ENCODE measurements at regions of chr6 and their contacts with region 1.

Region 1: GRCh38 chr6:31952140-31952805 is 6.4 kb downstream of the CFB start:
- DNase-seq: peak; percentile 92
- H3K4me3 Mint-ChIP-seq: no peak overlapping the region
- H3K27ac Mint-ChIP-seq: peak overlapping the region; percentile 69
- H3K4me1 Mint-ChIP-seq: peaks cover 41% of the 10 kb centered on the region
- H3K27me3 Mint-ChIP-seq: no peaks in the 10 kb centered on the region
- CTCF ChIP-seq: peak; percentile 95

Region 2: DNA sequence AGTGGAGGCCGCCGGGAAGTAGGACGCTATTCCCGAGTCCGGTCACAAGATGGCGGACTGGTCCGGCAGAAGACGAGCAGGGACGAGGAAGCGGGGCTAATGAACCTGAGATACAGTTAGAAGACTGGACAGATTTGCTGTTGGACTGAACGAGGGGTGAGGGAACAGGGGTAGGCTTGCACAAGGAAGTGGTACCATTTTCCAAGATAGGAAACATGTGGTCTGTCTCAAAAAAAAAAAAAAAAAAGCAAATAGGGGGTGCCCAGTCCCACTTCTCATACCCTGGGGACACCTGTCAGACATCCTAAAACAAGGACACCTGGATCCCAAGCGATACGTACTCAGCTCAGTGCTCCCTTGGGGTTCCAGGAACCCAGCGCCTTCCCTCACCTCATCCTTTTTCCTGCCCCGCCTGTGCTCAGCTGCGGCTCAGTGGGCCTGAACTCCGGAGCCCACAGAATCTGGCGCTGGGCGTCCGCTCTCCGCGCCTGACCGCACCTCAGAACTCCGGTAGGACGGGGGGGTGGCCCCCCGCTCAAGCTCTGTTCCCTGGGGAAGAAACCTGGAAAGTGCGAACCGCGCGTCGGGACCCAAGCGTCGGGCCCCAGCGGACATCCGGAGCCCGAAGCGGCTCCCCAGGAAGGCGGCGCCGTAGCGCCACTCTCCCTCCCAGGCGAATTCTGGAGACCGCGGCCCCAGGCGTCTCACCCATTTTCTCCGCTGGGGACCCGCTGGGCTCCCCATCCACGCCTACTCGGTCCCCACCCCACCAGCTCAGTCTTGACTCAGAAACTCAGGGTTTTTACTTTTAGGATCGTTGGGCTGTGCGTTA is 271.2 kb before region 1 on chr6 and contains the start of gene LY6G5C:
- CTCF ChIA-PET with region 1: interaction called, 6 read pairs
- intact Hi-C with region 1: loop called (anchors 1 kb)
- DNase-seq: peak; percentile 94
- H3K4me3 Mint-ChIP-seq: peak within 1 kb of the TSS; percentile 75
- H3K27ac Mint-ChIP-seq: peak within 1 kb of the TSS; percentile 89
- H3K4me1 Mint-ChIP-seq: peaks cover 28% of the 10 kb centered on the region
- H3K27me3 Mint-ChIP-seq: no peaks in the 10 kb centered on the region
- CTCF ChIP-seq: peak; percentile 83
- total RNA-seq, gene LY6G5C: 4.9 and 5.4 TPM in 2 replicates

Region 3: DNA sequence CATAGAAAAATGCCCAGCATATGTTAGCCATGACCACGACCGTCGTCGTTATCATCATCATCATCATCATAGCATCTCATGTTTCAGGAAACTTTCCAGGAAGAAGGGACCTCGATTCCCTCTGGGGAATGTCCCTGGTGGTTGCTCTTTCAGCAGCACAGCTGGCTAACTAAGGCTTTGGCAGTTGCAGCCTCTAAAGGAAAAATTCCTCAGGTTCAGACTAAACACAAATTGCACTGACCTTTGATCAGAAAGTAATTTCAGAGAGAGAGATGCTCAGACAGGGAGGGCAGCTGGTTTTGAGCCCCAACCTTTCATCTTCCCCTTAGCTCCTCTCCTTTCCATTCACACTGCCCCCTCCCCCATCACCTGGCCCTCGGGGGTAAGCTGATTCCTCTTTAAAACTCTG is 12.0 kb before region 1 on chr6:
- CTCF ChIA-PET with region 1: interaction called, 18 read pairs
- intact Hi-C with region 1: no loop called
- DNase-seq: peak; percentile 82
- H3K4me3 Mint-ChIP-seq: peak overlapping the region; percentile 33
- H3K27ac Mint-ChIP-seq: peak overlapping the region; percentile 82
- H3K4me1 Mint-ChIP-seq: peaks cover 51% of the 10 kb centered on the region
- H3K27me3 Mint-ChIP-seq: no peaks in the 10 kb centered on the region
- CTCF ChIP-seq: no peak

Measured in Calu3 (cell line).